Gastrocnemius medialis (tissue), 4 donors: ENCODE measurements at regions of chr5 and their contacts with region 1.

Region 1: DNA sequence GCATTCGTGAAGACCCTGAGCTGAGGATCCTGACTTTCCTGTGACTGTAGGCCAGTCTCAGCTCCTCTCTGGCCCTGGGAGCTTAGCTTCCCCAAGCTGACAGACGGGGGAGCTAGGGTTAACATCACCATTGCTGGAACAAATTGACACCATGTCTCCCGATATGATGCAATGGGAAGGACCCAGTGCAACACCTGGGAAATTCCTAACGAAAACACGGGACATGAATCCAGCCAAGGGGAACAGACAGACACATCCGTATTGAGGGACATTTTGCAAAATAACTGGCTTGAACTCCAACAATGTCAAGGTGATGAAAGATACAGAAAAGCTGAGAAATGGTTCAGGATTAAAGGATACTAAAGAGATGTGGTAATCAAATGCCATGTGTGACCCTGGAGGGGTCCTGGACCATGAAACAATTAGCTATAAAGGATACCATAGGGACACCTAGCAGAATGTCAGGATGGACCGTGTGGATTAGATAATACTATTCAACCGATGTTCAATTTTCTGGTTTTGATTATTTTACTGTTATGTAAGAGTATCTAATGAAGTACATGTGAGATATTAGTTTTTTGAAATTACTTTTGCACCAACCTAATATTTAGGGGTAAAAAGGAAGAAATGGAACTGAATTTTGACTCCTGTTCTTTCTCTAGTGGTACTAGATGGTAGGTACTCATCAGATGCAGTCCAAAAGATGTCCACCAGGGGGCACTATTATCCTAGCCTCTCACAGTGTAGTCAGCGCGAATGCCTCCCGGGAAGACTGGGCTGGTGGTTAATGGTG is 52.7 kb downstream of the NDST1 start:
- DNase-seq: peak; percentile 78 to 81
- ATAC-seq: peak; percentile 86 to 89
- H3K4me3 ChIP-seq: no peak overlapping the region
- H3K27ac ChIP-seq: no peak overlapping the region
- H3K4me1 ChIP-seq: peaks cover 16 to 19% of the 10 kb centered on the region in 2 donors
- H3K27me3 ChIP-seq: no peaks in the 10 kb centered on the region
- CTCF ChIP-seq: peak; percentile 84 to 97 (median 94)
- POLR2A ChIP-seq: no peak

Region 2: GRCh38 chr5:150339165-150339564 is 221.4 kb before region 1 on chr5:
- in situ Hi-C with region 1: no loop called
- intact Hi-C with region 1: no loop called
- DNase-seq: peak in 1 of 2 donors; percentile 62
- ATAC-seq: peak; percentile 75 to 92
- H3K4me3 ChIP-seq: no peak overlapping the region
- H3K27ac ChIP-seq: peak overlapping the region in 3 of 4 donors; percentile 28 to 57 (median 35)
- H3K4me1 ChIP-seq: peaks cover 0 to 13% of the 10 kb centered on the region in 2 donors
- H3K27me3 ChIP-seq: no peaks in the 10 kb centered on the region
- CTCF ChIP-seq: no peak
- POLR2A ChIP-seq: no peak

Region 3: GRCh38 chr5:150656191-150657132 is 95.9 kb after region 1 on chr5:
- in situ Hi-C with region 1: loop called (anchors 5 to 10 kb)
- intact Hi-C with region 1: loop called (anchors 1 kb)
- DNase-seq: peak in 1 of 2 donors; percentile 78
- ATAC-seq: peak; percentile 35 to 39
- H3K4me3 ChIP-seq: peak overlapping the region; percentile 55 to 79 (median 68)
- H3K27ac ChIP-seq: peak overlapping the region; percentile 99 to 100 (median 99)
- H3K4me1 ChIP-seq: peaks cover 64 to 74% of the 10 kb centered on the region in 2 donors
- H3K27me3 ChIP-seq: no peaks in the 10 kb centered on the region
- CTCF ChIP-seq: peak; percentile 48 to 92 (median 83)
- POLR2A ChIP-seq: peak; percentile 56 to 67

Region 4: DNA sequence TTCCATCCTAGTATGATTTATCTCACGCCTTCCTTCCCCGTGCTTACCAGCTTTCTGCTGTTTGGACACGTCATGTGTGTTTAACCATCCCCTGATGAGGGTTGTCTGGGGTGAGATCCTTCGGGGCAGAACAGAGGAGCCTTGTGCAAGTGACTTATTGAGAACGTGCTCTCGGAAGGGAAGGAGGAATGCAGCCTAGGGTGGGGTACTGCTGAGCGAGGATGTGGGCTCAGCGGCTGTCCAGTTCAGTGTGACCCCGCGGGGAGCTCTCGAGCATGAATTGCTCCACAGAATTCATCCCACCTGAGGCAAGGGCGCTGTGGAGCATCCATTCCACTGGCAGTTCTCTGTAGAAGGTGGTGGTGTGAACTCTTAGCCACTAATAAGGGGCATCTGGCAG is 104.4 kb after region 1 on chr5:
- in situ Hi-C with region 1: loop called in 1 of 4 experiments (anchors 10 kb)
- intact Hi-C with region 1: no loop called
- DNase-seq: no peak
- ATAC-seq: no peak
- H3K4me3 ChIP-seq: no peak overlapping the region
- H3K27ac ChIP-seq: peak overlapping the region; percentile 91 to 99 (median 98)
- H3K4me1 ChIP-seq: peaks cover 52 to 87% of the 10 kb centered on the region in 2 donors
- H3K27me3 ChIP-seq: no peaks in the 10 kb centered on the region
- CTCF ChIP-seq: no peak
- POLR2A ChIP-seq: no peak

Region 5: GRCh38 chr5:150710165-150710564 is 149.6 kb after region 1 on chr5:
- in situ Hi-C with region 1: loop called in 2 of 4 experiments (anchors 5 to 10 kb)
- intact Hi-C with region 1: loop called (anchors 1 kb)
- DNase-seq: no peak
- ATAC-seq: peak in 1 of 2 donors; percentile 42
- H3K4me3 ChIP-seq: no peak overlapping the region
- H3K27ac ChIP-seq: no peak overlapping the region
- H3K4me1 ChIP-seq: no peaks in the 10 kb centered on the region
- H3K27me3 ChIP-seq: no peaks in the 10 kb centered on the region
- CTCF ChIP-seq: peak; percentile 20 to 47 (median 35)
- POLR2A ChIP-seq: no peak

Region 6: DNA sequence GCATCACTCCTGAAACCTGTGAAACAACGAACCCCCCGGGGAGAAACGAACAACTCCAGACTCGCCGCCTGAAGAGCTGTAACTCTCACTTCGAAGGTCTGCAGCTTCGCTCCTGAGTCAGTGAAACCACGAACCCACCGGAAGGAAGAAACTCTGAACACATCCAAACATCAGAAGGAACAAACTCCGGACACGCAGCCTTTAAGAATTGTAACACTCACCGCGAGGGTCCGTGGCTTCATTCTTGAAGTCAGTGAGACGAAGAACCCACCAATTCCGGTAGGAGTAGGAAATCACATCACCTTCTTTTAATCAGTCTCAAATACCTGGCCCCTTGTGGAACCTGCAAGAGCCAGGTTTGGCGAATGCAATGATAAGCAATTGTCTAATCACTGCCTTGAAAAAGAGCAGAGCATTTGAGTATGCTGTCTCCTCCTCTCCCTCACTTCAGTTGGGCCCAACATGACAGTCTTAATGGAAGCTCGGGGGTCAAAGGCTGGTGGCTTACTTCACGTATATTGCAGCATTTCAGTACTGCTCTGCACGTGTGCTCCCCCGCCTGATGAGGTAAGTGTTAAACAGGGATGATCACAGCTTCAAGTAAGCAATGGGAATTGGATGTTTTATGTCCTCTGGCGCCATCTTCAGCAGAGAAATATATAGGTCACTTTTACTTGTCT is 286.2 kb after region 1 on chr5:
- in situ Hi-C with region 1: loop called (anchors 5 to 25 kb)
- intact Hi-C with region 1: loop called (anchors 1 kb)
- DNase-seq: peak; percentile 9 to 17
- ATAC-seq: peak; percentile 74 to 84
- H3K4me3 ChIP-seq: no peak overlapping the region
- H3K27ac ChIP-seq: no peak overlapping the region
- H3K4me1 ChIP-seq: peaks cover 0 to 3% of the 10 kb centered on the region in 2 donors
- H3K27me3 ChIP-seq: no peaks in the 10 kb centered on the region
- CTCF ChIP-seq: peak; percentile 33 to 68 (median 59)
- POLR2A ChIP-seq: no peak

Region 7: DNA sequence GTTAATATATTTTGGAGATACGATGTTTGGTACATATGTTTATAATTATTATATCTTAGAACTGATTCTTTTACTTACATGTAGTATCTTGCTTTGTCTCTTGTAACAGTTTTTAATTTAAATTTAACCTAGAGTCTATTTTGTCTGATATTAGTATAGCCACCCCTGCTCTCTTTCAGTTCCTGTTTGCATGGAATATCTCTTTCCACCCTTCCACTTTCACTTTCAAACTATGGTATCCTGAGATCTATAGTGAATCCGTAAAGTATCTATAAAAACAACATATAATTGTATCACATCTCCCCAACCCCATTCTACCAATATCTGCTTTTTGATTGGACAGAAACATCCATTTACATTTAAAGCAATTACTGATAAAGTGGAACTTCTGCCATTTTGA is 293.0 kb after region 1 on chr5:
- in situ Hi-C with region 1: loop called (anchors 5 to 25 kb)
- intact Hi-C with region 1: no loop called
- DNase-seq: no peak
- ATAC-seq: no peak
- H3K4me3 ChIP-seq: no peak overlapping the region
- H3K27ac ChIP-seq: no peak overlapping the region
- H3K4me1 ChIP-seq: no peaks in the 10 kb centered on the region
- H3K27me3 ChIP-seq: no peaks in the 10 kb centered on the region
- CTCF ChIP-seq: no peak
- POLR2A ChIP-seq: no peak